MCF 10A (cell line): ENCODE measurements at regions of chr6 and their contacts with region 1.

Region 1: DNA sequence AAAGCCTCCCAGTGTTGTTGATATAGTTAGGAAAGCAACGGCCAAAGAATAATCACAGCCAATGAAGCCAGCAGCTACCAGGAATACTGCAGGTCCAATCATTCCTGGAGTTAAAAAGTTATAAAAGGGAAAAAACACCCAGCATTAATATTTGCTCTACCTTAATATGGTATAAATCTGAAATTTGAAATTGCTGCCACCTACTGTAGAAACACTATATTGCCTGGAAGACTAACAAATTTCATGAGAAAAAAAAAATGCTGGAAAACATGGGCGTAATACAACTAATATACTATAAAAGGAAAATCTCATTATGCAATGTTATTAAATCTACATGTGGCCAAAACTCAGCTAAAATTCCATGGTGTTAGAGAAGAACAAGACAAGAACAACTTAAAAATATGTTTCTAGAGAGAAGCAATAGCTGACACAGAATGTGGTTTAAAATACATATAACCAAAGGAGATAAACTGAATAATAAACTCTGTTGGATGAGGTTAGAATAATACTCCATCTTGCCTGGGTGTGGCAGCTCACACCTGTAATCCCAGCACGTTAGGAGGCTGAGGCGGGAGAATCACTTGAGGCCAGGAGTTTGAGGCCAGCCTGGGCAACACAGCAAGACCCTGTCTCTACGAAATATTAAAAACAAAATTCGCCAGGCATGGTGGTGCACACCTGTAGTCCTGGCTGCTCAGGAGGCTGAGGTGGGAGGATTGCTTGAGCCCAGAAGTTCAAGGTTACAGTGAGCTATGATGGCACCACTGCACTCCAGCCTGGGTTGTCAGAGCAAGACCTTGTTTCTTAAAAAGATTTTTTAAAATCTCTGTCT is 43.1 kb downstream of the SLC17A5 start:
- DNase-seq: peak; percentile 64
- H3K4me3 Mint-ChIP-seq: no peak overlapping the region
- H3K27ac Mint-ChIP-seq: peak overlapping the region; percentile 19
- H3K4me1 Mint-ChIP-seq: no peaks in the 10 kb centered on the region
- H3K27me3 Mint-ChIP-seq: no peaks in the 10 kb centered on the region
- CTCF ChIP-seq: peak; percentile 42

Region 2: GRCh38 chr6:72748759-72749158 is 861.9 kb before region 1 on chr6:
- CTCF ChIA-PET with region 1: no interaction called
- POLR2A ChIA-PET with region 1: no interaction called
- intact Hi-C with region 1: no loop called
- DNase-seq: peak; percentile 92
- H3K4me3 Mint-ChIP-seq: no peak overlapping the region
- H3K27ac Mint-ChIP-seq: no peak overlapping the region
- H3K4me1 Mint-ChIP-seq: peaks cover 32% of the 10 kb centered on the region
- H3K27me3 Mint-ChIP-seq: no peaks in the 10 kb centered on the region
- CTCF ChIP-seq: no peak

Region 3: GRCh38 chr6:73560182-73560732 is 50.4 kb before region 1 on chr6:
- CTCF ChIA-PET with region 1: no interaction called
- POLR2A ChIA-PET with region 1: no interaction called
- intact Hi-C with region 1: no loop called
- DNase-seq: no peak
- H3K4me3 Mint-ChIP-seq: no peak overlapping the region
- H3K27ac Mint-ChIP-seq: no peak overlapping the region
- H3K4me1 Mint-ChIP-seq: no peaks in the 10 kb centered on the region
- H3K27me3 Mint-ChIP-seq: no peaks in the 10 kb centered on the region
- CTCF ChIP-seq: no peak

Region 4: GRCh38 chr6:73580247-73581149 is 30.2 kb before region 1 on chr6:
- CTCF ChIA-PET with region 1: interaction called, 5 read pairs
- POLR2A ChIA-PET with region 1: interaction called, 11 read pairs
- intact Hi-C with region 1: no loop called
- DNase-seq: peak; percentile 94
- H3K4me3 Mint-ChIP-seq: peak overlapping the region; percentile 81
- H3K27ac Mint-ChIP-seq: peak overlapping the region; percentile 100
- H3K4me1 Mint-ChIP-seq: peaks cover 9% of the 10 kb centered on the region
- H3K27me3 Mint-ChIP-seq: no peaks in the 10 kb centered on the region
- CTCF ChIP-seq: peak; percentile 17

Region 5: DNA sequence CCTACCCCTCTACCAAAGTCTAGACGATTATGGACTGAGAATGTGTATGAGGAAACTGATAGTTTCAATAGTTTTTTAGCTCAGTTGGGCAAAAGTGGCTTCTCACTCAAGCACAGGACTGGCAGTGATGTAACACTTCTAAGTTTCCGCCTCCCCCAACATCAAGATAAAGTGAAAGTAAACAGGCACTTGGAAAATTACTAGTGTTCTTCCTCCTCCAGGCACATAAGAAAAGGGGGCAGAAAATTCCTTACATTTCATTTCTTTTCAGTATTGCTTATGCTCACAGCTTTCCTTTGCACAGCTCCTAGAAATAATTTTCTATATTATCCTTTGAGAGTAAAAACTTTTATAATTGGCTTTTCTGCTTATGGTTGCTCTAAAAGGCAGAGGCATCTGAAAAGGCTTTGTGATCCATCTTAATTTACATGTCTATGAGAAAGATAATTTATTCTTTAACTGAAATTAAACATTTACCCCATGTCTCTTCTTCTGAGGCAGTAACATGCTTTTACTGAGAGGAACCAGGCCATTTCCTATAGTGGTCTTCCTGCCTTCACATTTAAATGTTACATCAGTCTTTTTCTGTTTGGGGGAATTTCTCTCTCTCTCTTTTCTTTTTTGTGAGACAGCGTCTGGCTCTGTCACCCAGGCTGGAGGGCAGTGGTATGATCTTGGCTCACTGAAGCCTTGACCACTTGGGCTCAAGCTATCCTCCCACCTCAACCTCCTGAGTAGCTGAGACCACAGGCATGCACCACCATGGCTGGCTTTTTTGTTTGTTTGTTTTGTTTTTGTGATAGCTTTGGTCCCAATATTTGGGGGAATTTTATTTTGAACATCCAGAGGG is 24.9 kb before region 1 on chr6:
- CTCF ChIA-PET with region 1: interaction called, 8 read pairs
- POLR2A ChIA-PET with region 1: interaction called, 10 read pairs
- intact Hi-C with region 1: no loop called
- DNase-seq: peak; percentile 79
- H3K4me3 Mint-ChIP-seq: peak overlapping the region; percentile 63
- H3K27ac Mint-ChIP-seq: peak overlapping the region; percentile 98
- H3K4me1 Mint-ChIP-seq: peaks cover 10% of the 10 kb centered on the region
- H3K27me3 Mint-ChIP-seq: no peaks in the 10 kb centered on the region
- CTCF ChIP-seq: no peak

Region 6: GRCh38 chr6:73747289-73747688 is 136.6 kb after region 1 on chr6:
- CTCF ChIA-PET with region 1: no interaction called
- POLR2A ChIA-PET with region 1: no interaction called
- intact Hi-C with region 1: no loop called
- DNase-seq: no peak
- H3K4me3 Mint-ChIP-seq: no peak overlapping the region
- H3K27ac Mint-ChIP-seq: no peak overlapping the region
- H3K4me1 Mint-ChIP-seq: peaks cover 6% of the 10 kb centered on the region
- H3K27me3 Mint-ChIP-seq: no peaks in the 10 kb centered on the region
- CTCF ChIP-seq: no peak